ENCODE measurements at regions of chr3 and their contacts with region 1.

Region 1: DNA sequence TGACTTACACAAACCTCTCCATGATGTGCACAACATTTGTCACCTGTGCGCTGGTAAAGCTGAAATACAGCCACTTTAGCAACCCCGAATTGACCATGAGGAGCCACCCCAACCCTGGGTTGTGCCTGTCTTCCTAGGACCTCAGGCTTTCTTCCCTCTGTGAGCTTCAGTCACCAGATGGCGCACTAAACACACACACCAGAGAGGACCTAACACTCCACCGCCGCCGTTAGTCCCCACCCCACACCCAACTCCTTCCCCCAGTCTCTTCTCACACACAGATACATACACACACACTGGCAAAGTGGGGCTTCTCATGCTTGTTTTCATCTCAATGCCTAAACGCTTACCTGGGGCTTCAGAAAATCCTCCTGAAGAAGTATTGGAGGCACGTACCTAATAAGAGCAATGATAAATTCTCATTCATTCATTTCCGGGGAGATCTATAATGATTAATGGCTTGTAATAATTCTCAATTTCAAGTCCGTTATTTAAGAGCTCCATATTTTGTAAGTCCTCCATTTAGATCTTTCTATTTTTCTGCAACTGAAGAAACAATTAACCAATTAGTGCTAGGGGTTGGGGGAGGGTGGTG is 2.1 kb upstream of the CCDC80 start:
- DNase-seq: peak; percentile 94
- H3K4me3 ChIP-seq: peak overlapping the region; percentile 97
- H3K27ac ChIP-seq: peak overlapping the region; percentile 95
- H3K4me1 ChIP-seq: peaks cover 53% of the 10 kb centered on the region
- H3K27me3 ChIP-seq: no peaks in the 10 kb centered on the region

Region 2: DNA sequence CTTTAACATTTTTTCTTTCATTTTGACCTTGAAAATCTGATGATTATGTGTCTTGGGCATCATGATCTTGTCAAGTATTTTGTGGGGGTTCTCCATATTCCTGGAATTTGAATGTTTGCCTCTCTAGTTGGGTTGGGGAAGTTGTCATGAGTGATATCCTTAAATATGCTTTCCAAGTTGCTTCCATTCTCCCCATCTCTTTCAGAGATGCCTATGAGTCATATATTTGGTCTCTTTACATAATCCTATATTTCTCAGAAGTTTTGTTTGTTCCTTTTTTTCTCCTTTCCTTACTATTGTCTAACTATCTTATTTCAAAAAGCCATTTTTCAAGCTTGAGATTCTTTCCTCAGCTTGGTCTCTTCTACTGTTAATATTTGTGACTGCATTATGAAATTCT is 66.9 kb after region 1 on chr3:
- in situ Hi-C with region 1: loop called (anchors 5 kb)
- DNase-seq: no peak
- H3K4me3 ChIP-seq: no peak overlapping the region
- H3K27ac ChIP-seq: no peak overlapping the region
- H3K4me1 ChIP-seq: no peaks in the 10 kb centered on the region
- H3K27me3 ChIP-seq: no peaks in the 10 kb centered on the region

Region 3: GRCh38 chr3:112818289-112818688 is 175.3 kb after region 1 on chr3:
- in situ Hi-C with region 1: loop called (anchors 5 kb)
- DNase-seq: peak; percentile 72
- H3K4me3 ChIP-seq: no peak overlapping the region
- H3K27ac ChIP-seq: peak overlapping the region; percentile 58
- H3K4me1 ChIP-seq: peaks cover 23% of the 10 kb centered on the region
- H3K27me3 ChIP-seq: no peaks in the 10 kb centered on the region

Region 4: DNA sequence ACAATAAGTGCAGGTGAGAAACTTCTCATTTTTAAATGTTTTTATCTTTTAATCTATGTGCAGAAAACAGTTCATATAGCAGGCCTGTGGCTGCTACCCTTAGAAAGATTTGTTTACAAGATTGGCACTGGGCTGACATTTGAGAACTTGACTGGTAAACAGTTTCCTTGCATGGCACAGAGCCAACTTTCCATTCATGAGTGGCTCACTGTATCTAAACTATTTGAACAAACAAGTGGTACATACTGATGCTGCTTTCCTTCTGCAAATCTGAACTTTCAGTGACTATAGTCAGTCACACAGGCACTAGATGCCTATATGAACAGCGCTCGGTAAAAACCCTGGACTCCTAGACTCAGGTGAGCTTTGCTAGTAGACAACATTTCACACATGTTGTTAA is 341.5 kb after region 1 on chr3:
- in situ Hi-C with region 1: loop called (anchors 10 kb)
- DNase-seq: no peak
- H3K4me3 ChIP-seq: no peak overlapping the region
- H3K27ac ChIP-seq: no peak overlapping the region
- H3K4me1 ChIP-seq: no peaks in the 10 kb centered on the region
- H3K27me3 ChIP-seq: no peaks in the 10 kb centered on the region

Region 5: DNA sequence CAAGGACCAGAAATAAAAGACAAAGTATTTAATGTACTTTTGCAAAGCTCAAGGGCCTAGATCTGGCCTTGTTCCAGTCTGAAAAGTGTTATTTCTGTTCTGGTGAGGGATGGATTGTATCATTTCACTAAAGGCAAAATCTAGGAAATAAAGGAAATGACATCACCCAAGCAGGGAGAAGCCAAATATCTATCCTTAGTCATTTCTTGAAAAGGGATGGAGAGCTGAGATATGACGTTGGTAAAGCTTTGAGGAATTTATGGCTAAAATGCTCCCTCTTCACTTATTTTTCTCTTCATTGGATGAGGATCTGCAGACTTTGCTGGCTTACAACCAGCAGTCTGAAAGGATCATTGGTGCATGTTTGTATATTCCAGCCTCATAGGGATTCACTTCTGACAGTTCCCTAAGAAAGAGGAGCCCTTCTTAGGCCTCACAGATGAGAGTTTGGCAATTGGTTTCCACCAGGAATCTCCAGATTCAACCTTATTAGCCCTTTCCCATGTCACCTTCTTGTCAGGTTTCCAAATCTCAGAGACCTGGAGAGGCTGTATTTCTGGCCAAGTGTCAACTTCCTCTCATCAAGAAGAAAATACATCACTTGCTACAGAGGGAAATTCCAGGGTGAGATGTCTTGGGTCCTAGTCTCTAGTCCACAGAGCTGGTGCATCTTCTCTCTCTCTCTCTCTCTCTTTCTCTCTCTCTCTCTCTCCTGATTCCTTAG is 474.7 kb after region 1 on chr3:
- in situ Hi-C with region 1: no loop called
- DNase-seq: peak; percentile 82
- H3K4me3 ChIP-seq: no peak overlapping the region
- H3K27ac ChIP-seq: no peak overlapping the region
- H3K4me1 ChIP-seq: peaks cover 10% of the 10 kb centered on the region
- H3K27me3 ChIP-seq: no peaks in the 10 kb centered on the region

Measured in GM23248 (cell line).